A673 (cell line): ENCODE measurements at regions of chr11 and their contacts with region 1.

Region 1: DNA sequence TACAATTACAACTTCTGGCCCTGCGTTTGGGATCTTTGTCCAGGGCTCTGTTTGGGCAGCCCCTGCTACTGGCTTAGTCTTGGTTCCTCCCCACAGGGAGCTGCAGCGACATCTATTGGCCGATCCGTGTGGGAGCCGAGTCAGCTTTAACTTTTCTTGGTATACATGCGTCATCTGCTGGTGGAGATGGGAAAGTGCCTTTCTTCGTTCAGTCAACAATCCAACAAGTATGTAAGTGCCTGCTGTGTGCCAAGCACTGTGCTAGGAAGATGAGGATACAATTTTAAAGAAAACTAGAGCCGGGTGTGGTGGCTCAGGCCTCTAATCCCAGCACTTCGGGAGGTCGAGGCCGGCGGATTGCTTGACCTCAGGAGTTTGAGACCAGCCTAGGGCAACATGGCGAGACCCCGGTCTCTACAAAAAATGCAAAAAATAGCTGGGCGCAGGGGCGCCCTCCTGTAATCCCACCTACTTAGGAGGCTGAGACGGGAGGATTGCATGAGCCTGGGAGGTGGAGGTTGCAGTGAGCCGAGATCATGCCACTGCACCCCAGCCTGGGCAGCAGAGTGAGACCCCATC is 8.2 kb downstream of the TPBGL start:
- DNase-seq: peak; percentile 95
- H3K4me3 ChIP-seq: no peak overlapping the region
- H3K27ac ChIP-seq: no peak overlapping the region
- H3K4me1 ChIP-seq: no peaks in the 10 kb centered on the region
- H3K27me3 ChIP-seq: peaks cover 18% of the 10 kb centered on the region
- CTCF ChIP-seq: peak; percentile 100

Region 2: DNA sequence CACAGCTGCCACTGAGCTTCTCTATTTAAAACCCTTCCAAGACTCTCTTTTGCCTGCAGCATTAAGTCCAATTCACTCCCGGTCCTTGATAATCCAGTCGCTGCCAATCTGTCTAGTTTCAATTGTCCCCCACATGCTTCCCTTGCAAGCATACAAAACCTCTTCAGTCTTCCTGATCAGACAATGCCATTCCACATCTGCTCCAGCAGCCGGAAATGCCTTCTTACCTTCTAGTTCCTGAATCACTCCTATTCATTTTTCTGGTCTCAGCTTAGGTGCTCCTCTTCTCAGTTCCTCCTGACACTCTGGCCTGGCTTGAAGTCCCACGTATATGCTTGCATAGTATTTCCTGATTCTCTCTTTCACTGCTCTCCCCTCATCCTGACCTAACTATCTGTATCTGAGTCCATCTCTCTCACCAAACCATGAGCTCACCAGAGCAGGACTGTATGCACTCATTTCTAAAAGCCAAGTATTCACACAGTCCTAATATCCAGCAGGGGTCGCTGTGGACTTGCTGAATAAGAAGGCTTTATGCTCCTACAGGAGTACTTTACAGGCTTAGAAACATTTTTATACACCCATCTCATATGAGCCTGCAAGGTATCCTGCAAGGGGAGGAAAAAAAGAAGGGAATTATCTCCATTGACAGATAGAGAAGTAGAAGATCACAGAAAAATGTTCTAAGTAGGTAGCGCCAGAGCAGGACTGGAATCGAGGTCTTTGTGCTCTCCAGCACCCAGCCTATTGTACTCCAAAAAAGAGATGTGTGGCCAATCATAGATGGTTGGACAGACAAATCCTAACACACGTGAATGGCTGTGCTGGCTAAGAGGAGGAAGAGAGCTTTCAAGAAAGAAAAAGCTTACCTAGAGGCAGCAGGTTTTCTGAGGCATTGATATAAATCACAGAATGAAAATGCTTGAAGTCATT is 319.1 kb before region 1 on chr11:
- CTCF ChIA-PET with region 1: interaction called, 9 read pairs
- POLR2A ChIA-PET with region 1: no interaction called
- intact Hi-C with region 1: loop called (anchors 1 kb)
- DNase-seq: peak; percentile 94
- H3K4me3 ChIP-seq: no peak overlapping the region
- H3K27ac ChIP-seq: no peak overlapping the region
- H3K4me1 ChIP-seq: peaks cover 7% of the 10 kb centered on the region
- H3K27me3 ChIP-seq: no peaks in the 10 kb centered on the region
- CTCF ChIP-seq: peak; percentile 98

Region 3: GRCh38 chr11:75022759-75023396 is 225.9 kb before region 1 on chr11:
- CTCF ChIA-PET with region 1: interaction called, 41 read pairs
- POLR2A ChIA-PET with region 1: no interaction called
- intact Hi-C with region 1: loop called (anchors 1 kb)
- DNase-seq: peak; percentile 91
- H3K4me3 ChIP-seq: no peak overlapping the region
- H3K27ac ChIP-seq: no peak overlapping the region
- H3K4me1 ChIP-seq: no peaks in the 10 kb centered on the region
- H3K27me3 ChIP-seq: no peaks in the 10 kb centered on the region
- CTCF ChIP-seq: peak; percentile 98

Region 4: GRCh38 chr11:75195121-75195551 is 53.6 kb before region 1 on chr11:
- CTCF ChIA-PET with region 1: interaction called, 10 read pairs
- POLR2A ChIA-PET with region 1: no interaction called
- intact Hi-C with region 1: no loop called
- DNase-seq: no peak
- H3K4me3 ChIP-seq: no peak overlapping the region
- H3K27ac ChIP-seq: no peak overlapping the region
- H3K4me1 ChIP-seq: no peaks in the 10 kb centered on the region
- H3K27me3 ChIP-seq: no peaks in the 10 kb centered on the region
- CTCF ChIP-seq: no peak

Region 5: DNA sequence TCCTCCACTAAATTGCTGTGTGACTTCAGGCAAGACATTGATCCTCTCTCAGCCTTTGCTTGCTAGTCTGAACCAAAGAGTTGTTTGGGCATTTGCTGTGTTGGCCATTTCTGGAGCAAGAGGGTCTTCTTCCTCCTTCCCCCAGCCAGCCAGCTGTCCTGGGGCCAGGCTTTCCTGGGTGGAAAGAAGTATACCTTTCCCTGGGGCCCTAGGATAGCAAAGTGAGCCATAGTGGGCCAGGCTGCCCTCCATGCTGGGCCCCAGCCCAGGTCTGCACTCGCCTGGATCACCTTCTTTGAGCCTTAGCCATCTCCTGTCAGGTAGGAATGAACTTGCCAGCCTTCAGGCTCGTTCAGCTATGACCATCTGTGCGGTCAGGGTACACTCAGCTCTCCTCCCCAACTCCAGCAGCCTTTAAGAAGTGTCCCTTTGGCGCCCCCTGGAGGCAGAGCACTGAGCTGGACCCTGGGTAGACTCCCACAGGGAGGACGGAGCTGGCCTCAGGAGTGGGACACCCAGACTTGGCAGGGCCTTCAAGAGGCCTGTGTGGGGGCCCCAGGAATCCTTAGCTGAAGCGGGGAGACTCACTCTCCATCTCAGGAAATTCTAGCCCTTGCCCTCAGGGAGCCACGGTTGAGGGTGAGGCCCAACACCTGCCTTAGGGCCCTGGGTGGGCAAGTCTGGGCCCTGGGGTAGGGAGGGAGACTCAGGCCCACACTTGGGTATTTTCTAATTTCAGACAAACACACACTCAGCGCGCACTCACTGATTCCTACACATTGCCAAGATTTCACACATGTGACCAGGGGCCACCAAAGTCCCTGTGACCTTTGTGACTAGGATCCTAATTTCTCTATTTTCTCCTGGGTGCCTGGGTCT is 43.9 kb before region 1 on chr11:
- CTCF ChIA-PET with region 1: interaction called, 11 read pairs
- POLR2A ChIA-PET with region 1: no interaction called
- intact Hi-C with region 1: no loop called
- DNase-seq: peak; percentile 87
- H3K4me3 ChIP-seq: no peak overlapping the region
- H3K27ac ChIP-seq: no peak overlapping the region
- H3K4me1 ChIP-seq: no peaks in the 10 kb centered on the region
- H3K27me3 ChIP-seq: peaks cover 24% of the 10 kb centered on the region
- CTCF ChIP-seq: peak; percentile 99

Region 6: DNA sequence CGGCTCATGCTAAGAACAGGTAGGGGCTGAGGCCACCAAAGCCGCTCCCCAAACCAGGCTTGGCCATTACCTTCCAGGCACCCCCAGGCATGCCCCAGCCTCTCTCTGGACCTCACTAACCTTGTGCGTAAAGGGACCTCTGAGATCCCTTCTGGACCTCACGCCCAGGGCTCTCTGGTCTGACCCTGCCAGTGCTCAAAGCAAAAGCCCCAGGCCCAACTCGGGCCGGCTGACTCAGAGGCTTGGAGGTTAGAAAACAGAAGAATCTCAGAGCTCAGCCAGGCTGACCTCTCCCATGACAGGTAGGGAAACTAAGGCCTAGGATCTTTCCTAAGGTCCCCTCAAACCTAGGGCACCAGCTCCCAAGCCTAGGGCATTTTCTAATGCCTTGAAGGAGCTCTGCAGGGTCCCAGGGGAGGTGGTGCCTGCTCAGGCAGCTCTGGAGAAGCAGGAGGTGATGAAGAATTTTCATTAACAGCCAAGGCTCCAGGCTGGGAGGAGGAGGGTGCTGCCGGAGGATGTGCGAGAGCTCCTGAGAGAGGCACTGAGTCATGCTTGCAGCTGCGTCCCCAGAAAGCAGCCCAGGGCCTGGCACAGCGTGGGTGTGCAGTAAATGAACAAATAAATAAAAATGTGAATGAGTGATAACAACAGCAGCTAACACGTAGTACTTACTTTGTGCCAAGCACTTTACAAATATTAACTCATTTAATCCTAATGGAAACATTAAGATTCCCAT is 77.1 kb after region 1 on chr11:
- CTCF ChIA-PET with region 1: no interaction called
- POLR2A ChIA-PET with region 1: no interaction called
- intact Hi-C with region 1: no loop called
- DNase-seq: peak; percentile 88
- H3K4me3 ChIP-seq: no peak overlapping the region
- H3K27ac ChIP-seq: peak overlapping the region; percentile 48
- H3K4me1 ChIP-seq: peaks cover 31% of the 10 kb centered on the region
- H3K27me3 ChIP-seq: no peaks in the 10 kb centered on the region
- CTCF ChIP-seq: no peak

Region 7: GRCh38 chr11:75508044-75508561 is 259.3 kb after region 1 on chr11:
- CTCF ChIA-PET with region 1: no interaction called
- POLR2A ChIA-PET with region 1: no interaction called
- intact Hi-C with region 1: no loop called
- DNase-seq: no peak
- H3K4me3 ChIP-seq: no peak overlapping the region
- H3K27ac ChIP-seq: no peak overlapping the region
- H3K4me1 ChIP-seq: no peaks in the 10 kb centered on the region
- H3K27me3 ChIP-seq: no peaks in the 10 kb centered on the region
- CTCF ChIP-seq: no peak